Breast epithelium (tissue), 4 donors: ENCODE measurements at regions of chr11 and their contacts with region 1.

Region 1: DNA sequence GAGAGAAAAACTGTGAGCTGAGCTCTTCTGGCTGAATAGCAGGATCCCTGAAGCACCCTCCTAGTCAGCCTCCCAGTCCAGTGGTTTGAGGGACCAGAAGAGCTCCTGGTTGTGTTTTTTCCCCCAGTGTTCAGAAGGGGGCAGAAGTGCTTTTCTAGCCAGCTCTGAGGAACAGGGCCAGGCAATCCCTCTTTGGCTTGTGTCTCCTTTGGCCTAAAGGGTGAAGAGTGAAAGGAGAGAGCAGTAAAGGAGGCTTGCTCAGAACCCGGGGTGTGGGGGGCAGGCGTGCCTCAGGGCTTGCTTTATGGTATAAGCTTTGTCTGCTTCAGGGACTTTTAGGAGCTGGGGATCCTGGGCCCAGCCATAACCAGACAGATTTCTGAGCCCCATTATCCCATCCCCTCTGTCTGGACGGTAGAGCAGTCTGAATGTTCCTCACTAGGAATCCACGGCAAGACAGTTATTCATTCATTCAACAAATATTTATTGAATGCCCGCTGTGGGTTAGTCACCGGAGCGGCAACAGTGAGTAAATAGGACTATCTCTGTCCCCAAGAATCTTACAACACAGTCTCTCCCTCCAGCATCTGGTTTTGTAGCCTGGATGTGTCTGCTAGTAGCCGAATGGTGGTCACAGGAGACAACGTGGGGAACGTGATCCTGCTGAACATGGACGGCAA is 14.5 kb downstream of the ACP2 start:
- DNase-seq: no peak
- H3K4me3 ChIP-seq: peak overlapping the region in 2 of 3 donors; percentile 17 to 54
- H3K27ac ChIP-seq: peak overlapping the region; percentile 54 to 76
- H3K4me1 ChIP-seq: no peaks in the 10 kb centered on the region
- H3K27me3 ChIP-seq: no peaks in the 10 kb centered on the region
- CTCF ChIP-seq: no peak
- POLR2A ChIP-seq: no peak

Region 2: GRCh38 chr11:47171856-47172255 is 62.3 kb before region 1 on chr11:
- intact Hi-C with region 1: loop called (anchors 2 kb)
- DNase-seq: no peak
- H3K4me3 ChIP-seq: no peak overlapping the region
- H3K27ac ChIP-seq: no peak overlapping the region
- H3K4me1 ChIP-seq: peaks cover 2 to 10% of the 10 kb centered on the region in 2 donors
- H3K27me3 ChIP-seq: no peaks in the 10 kb centered on the region
- CTCF ChIP-seq: no peak
- POLR2A ChIP-seq: no peak